ENCODE measurements at regions of chr20 and their contacts with region 1.

Region 1: DNA sequence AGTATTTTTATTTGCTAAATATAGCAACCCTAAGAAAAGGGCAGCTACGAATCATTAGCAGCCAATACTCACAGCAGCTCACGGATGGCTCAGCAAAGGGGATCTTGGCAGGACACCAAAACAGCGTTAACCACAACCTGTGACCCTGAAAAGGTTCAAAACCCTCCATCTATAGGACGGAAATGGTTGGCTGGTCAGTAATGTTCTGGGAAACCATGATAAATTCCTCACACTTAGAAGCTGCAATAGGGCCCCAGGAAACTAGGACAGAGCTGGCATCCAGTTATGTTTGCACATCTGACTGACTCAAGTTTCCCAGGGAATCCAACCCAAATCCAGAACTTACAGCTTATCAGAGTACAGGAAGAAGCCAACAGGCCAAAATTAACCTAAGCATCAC is 30.9 kb upstream of the PTPRT start:
- DNase-seq: no peak
- H3K4me3 ChIP-seq: no peak overlapping the region
- H3K27ac ChIP-seq: no peak overlapping the region
- H3K4me1 ChIP-seq: no peaks in the 10 kb centered on the region
- H3K27me3 ChIP-seq: no peaks in the 10 kb centered on the region
- CTCF ChIP-seq: no peak
- EP300 ChIP-seq: no peak
- POLR2A ChIP-seq: no peak

Region 2: GRCh38 chr20:43096126-43096930 is 124.3 kb before region 1 on chr20:
- in situ Hi-C with region 1: no loop called
- intact Hi-C with region 1: no loop called
- DNase-seq: no peak
- H3K4me3 ChIP-seq: no peak overlapping the region
- H3K27ac ChIP-seq: no peak overlapping the region
- H3K4me1 ChIP-seq: no peaks in the 10 kb centered on the region
- H3K27me3 ChIP-seq: no peaks in the 10 kb centered on the region
- CTCF ChIP-seq: no peak
- EP300 ChIP-seq: no peak
- POLR2A ChIP-seq: no peak

Region 3: GRCh38 chr20:43255861-43256260 is 35.2 kb after region 1 on chr20:
- in situ Hi-C with region 1: no loop called
- intact Hi-C with region 1: loop called (anchors 1 kb)
- DNase-seq: no peak
- H3K4me3 ChIP-seq: no peak overlapping the region
- H3K27ac ChIP-seq: no peak overlapping the region
- H3K4me1 ChIP-seq: no peaks in the 10 kb centered on the region
- H3K27me3 ChIP-seq: no peaks in the 10 kb centered on the region
- CTCF ChIP-seq: no peak
- EP300 ChIP-seq: no peak
- POLR2A ChIP-seq: no peak

Region 4: DNA sequence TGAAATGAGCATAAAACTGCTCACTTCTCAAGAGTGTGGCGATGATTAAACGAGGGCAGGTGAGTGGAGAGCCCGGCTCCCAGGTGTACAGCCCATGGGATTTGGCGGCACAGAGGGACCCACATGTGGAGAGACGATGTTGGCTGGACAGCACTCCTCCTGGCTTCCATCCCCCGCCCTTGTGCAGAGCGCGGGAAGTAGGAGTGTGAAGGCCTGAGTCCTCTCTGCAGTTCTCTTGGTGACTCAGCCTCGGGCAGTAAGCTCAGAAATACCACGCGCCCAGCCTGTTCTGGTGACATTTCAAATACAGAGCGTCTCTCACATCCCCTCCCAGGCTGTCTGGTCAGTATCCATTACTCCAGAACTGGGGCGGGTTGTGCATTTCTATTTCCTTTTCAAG is 142.9 kb after region 1 on chr20:
- in situ Hi-C with region 1: loop called in 1 of 4 experiments (anchors 25 kb)
- intact Hi-C with region 1: no loop called
- DNase-seq: no peak
- H3K4me3 ChIP-seq: no peak overlapping the region
- H3K27ac ChIP-seq: no peak overlapping the region
- H3K4me1 ChIP-seq: no peaks in the 10 kb centered on the region
- H3K27me3 ChIP-seq: peaks cover 8% of the 10 kb centered on the region
- CTCF ChIP-seq: no peak
- EP300 ChIP-seq: no peak
- POLR2A ChIP-seq: no peak